HepG2 (cell line): ENCODE measurements at regions of chr4 and their contacts with region 1.

Region 1: GRCh38 chr4:32661229-32661628 is 1941.1 kb downstream of the PCDH7 start:
- DNase-seq: peak; percentile 65
- ATAC-seq: peak; percentile 83
- H3K4me3 ChIP-seq: no peak overlapping the region
- H3K27ac ChIP-seq: no peak overlapping the region
- H3K4me1 ChIP-seq: peaks cover 6% of the 10 kb centered on the region; the same call in 1 of the 2 replicates
- H3K27me3 ChIP-seq: no peaks in the 10 kb centered on the region
- CTCF ChIP-seq: no peak
- EP300 ChIP-seq: peak in 1 of 2 experiments; percentile 56; a peak in 2 of 4 replicates
- POLR2A ChIP-seq: no peak
- RAD21 ChIP-seq: no peak

Region 2: GRCh38 chr4:32702137-32702536 is 40.9 kb after region 1 on chr4:
- CTCF ChIA-PET with region 1: no interaction called
- POLR2A ChIA-PET with region 1: no interaction called
- in situ Hi-C with region 1: no loop called
- intact Hi-C with region 1: loop called (anchors 1 kb)
- DNase-seq: no peak
- ATAC-seq: no peak
- H3K4me3 ChIP-seq: no peak overlapping the region
- H3K27ac ChIP-seq: no peak overlapping the region
- H3K4me1 ChIP-seq: peaks cover 13% of the 10 kb centered on the region
- H3K27me3 ChIP-seq: no peaks in the 10 kb centered on the region
- CTCF ChIP-seq: no peak
- EP300 ChIP-seq: no peak
- POLR2A ChIP-seq: no peak
- RAD21 ChIP-seq: no peak

Region 3: GRCh38 chr4:32748498-32748897 is 87.3 kb after region 1 on chr4:
- CTCF ChIA-PET with region 1: no interaction called
- POLR2A ChIA-PET with region 1: no interaction called
- in situ Hi-C with region 1: no loop called
- intact Hi-C with region 1: loop called (anchors 10 kb)
- DNase-seq: peak; percentile 79
- ATAC-seq: peak; percentile 98
- H3K4me3 ChIP-seq: no peak overlapping the region
- H3K27ac ChIP-seq: no peak overlapping the region
- H3K4me1 ChIP-seq: peaks cover 9% of the 10 kb centered on the region
- H3K27me3 ChIP-seq: no peaks in the 10 kb centered on the region; a peak in 1 of 5 replicates
- CTCF ChIP-seq: peak; percentile 36
- EP300 ChIP-seq: no peak
- POLR2A ChIP-seq: no peak
- RAD21 ChIP-seq: no peak

Region 4: GRCh38 chr4:32798471-32799159 is 137.4 kb after region 1 on chr4:
- CTCF ChIA-PET with region 1: no interaction called
- POLR2A ChIA-PET with region 1: no interaction called
- in situ Hi-C with region 1: no loop called
- intact Hi-C with region 1: no loop called
- DNase-seq: no peak
- ATAC-seq: no peak
- H3K4me3 ChIP-seq: no peak overlapping the region
- H3K27ac ChIP-seq: no peak overlapping the region
- H3K4me1 ChIP-seq: no peaks in the 10 kb centered on the region
- H3K27me3 ChIP-seq: no peaks in the 10 kb centered on the region
- CTCF ChIP-seq: no peak
- EP300 ChIP-seq: no peak
- POLR2A ChIP-seq: no peak
- RAD21 ChIP-seq: no peak